A673 (cell line): ENCODE measurements at regions of chr10 and their contacts with region 1.

Region 1: DNA sequence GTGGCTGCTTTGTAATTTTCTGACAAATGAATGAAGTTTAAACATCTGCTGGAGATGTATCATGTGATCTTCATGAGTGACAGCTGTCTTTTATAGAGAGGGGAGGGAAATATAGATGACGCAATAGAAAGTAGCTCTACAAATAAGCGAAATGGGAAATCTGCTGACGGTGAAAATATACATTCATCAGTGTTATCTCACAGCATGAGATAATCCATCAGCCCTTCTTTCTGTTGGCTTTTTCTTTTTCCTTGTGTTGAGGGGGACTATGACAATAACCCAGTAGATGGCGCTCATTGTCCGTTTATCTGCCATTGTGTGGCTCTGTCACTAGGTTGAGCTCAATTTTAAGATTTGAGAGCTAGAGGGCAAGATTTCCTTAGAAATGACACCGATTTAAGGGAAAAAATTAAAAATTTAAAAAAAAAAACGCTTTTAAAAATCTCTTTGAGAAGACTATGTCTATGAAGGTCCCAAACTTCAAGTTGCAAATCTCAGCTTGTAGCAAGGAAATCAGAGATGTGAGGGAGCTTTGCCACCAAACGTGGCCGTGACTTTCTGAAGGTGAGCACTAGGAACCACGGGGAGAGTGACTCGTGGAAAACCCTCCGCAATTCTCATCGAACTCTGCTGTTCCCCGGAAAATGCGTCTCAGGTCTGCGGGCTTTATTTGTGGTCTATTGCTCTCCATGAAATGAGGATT is 114.6 kb upstream of the SFMBT2 start:
- DNase-seq: peak; percentile 85
- H3K4me3 ChIP-seq: peak overlapping the region; percentile 13
- H3K27ac ChIP-seq: no peak overlapping the region
- H3K4me1 ChIP-seq: peaks cover 7% of the 10 kb centered on the region
- H3K27me3 ChIP-seq: no peaks in the 10 kb centered on the region
- CTCF ChIP-seq: peak; percentile 91

Region 2: DNA sequence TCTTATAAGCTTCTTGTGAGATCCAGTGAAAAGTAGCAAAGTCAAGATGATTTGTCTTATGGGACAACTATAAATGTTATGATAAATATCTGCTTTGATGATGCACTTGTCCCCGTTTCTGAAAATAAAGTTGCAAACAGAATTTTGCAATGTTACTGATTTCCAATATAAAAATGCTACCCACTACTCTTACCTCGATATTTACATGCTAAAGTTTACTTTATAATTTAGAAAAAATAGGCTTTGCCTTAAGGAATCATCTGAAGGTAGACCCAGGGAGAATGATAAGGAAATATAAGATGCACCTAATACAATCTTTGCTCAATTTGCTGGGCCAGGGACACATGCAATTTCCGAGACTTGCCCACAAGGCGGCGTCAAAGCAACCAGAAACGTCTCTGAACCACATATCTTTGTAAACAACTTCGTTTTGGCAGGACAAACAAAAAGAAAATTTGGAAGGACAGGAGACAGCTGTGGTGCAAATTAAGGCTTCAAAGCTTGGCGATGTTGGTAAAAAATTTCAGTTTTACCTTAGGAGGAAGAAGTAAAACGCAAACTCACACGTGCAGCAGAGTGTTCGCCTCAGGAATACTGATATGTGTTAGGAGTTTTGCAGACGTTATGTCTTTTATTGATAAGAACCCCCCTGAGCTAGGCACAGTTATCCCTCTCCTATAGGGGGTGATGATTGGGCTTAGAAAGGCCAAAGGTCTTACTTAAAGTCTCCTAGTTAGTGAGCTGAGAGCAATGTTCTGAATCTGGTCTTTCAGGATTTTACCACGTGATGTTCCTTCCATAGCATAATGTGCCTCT is 1079.8 kb before region 1 on chr10:
- CTCF ChIA-PET with region 1: interaction called, 10 read pairs
- POLR2A ChIA-PET with region 1: no interaction called
- intact Hi-C with region 1: no loop called
- DNase-seq: peak; percentile 44
- H3K4me3 ChIP-seq: no peak overlapping the region
- H3K27ac ChIP-seq: no peak overlapping the region
- H3K4me1 ChIP-seq: no peaks in the 10 kb centered on the region
- H3K27me3 ChIP-seq: peaks cover 47% of the 10 kb centered on the region
- CTCF ChIP-seq: peak; percentile 80

Region 3: GRCh38 chr10:6542999-6543430 is 982.5 kb before region 1 on chr10:
- CTCF ChIA-PET with region 1: no interaction called
- POLR2A ChIA-PET with region 1: no interaction called
- intact Hi-C with region 1: no loop called
- DNase-seq: no peak
- H3K4me3 ChIP-seq: no peak overlapping the region
- H3K27ac ChIP-seq: no peak overlapping the region
- H3K4me1 ChIP-seq: no peaks in the 10 kb centered on the region
- H3K27me3 ChIP-seq: peaks cover 81% of the 10 kb centered on the region
- CTCF ChIP-seq: no peak

Region 4: DNA sequence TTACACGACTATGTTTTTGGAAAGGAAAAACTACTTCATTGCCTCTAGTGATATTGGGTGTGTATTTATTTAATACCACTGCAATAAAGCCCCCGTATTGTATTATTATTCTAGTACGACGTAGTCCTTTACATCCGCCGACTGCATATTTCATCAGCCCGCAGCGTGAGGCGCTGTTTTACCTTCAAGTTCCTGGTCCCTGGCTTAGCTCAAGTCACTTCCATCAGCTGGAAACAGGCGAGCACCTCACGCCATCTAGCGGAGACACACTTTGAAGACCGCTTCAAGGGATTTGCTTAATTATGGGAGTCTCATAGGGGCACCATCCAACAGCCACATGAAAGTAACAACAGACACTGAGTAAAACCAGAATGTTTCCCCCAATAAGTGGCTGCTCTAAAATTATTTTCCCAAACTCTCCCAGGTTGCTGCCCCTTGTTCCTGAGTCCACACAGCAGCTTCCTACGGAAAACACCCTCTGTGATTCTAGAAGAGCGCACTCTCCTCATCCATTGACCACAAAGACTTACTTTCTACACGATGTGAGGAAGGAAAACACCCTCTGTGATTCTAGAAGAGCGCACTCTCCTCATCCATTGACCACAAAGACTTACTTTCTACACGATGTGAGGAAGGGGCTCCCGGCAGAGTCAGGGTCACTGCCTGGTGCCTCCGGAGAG is 161.9 kb after region 1 on chr10:
- CTCF ChIA-PET with region 1: interaction called, 72 read pairs
- POLR2A ChIA-PET with region 1: no interaction called
- intact Hi-C with region 1: loop called (anchors 1 kb)
- DNase-seq: peak; percentile 92
- H3K4me3 ChIP-seq: no peak overlapping the region
- H3K27ac ChIP-seq: no peak overlapping the region
- H3K4me1 ChIP-seq: no peaks in the 10 kb centered on the region
- H3K27me3 ChIP-seq: no peaks in the 10 kb centered on the region
- CTCF ChIP-seq: peak; percentile 96

Region 5: GRCh38 chr10:7872041-7872442 is 346.6 kb after region 1 on chr10:
- CTCF ChIA-PET with region 1: interaction called, 16 read pairs
- POLR2A ChIA-PET with region 1: no interaction called
- intact Hi-C with region 1: loop called (anchors 5 kb)
- DNase-seq: peak; percentile 62
- H3K4me3 ChIP-seq: peak overlapping the region; percentile 46
- H3K27ac ChIP-seq: peak overlapping the region; percentile 21
- H3K4me1 ChIP-seq: peaks cover 7% of the 10 kb centered on the region
- H3K27me3 ChIP-seq: no peaks in the 10 kb centered on the region
- CTCF ChIP-seq: peak; percentile 85

Region 6: DNA sequence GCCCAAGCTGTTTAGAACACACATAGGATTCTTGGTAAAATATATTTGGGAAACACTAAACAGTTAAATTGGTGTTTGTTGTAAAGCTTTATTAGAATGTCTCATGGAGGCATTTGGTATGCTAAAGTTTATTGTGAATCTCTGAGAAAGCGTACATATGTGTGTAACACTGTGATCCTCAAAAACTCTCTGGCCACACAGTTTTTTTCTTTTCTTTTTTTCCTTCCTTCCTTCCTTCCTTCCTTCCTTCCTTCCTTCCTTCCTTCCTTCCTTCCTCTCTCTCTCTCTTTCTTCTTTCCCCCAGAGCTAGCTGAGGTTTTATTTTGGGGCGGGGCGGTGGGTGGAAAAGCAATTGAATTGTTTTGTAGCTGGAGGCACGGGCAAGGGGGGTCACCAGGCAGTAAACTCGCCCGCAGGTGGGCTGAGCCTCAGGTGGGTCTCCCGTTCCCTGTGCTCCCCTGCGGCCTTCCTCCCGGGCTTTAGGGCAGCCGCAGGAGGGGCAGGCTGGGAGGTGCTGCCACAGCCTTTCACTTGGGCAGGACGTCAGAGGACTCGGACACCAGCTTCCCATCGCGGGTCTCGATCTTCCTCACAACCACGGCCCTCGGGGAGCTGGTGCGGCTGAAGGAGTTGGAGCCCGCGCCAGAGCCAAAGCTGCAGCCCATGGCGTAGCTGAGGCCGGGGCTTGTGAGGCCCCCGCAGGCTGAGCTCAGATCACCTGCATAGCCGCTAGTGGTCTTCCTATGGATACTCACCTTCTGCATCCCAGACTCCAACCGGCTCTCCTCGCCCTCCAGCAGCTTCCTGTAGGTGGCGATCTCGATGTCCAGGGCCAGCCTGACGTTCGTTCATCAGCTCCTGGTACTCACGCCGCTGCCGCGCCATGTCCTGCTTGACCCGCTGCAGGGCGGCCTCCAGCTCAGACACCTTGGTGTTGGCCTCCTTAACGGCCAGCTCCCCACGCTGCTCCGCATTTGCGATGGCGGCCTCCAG is 988.0 kb after region 1 on chr10:
- CTCF ChIA-PET with region 1: interaction called, 3 read pairs
- POLR2A ChIA-PET with region 1: no interaction called
- intact Hi-C with region 1: loop called (anchors 10 kb)
- DNase-seq: peak; percentile 69
- H3K4me3 ChIP-seq: no peak overlapping the region
- H3K27ac ChIP-seq: peak overlapping the region; percentile 86
- H3K4me1 ChIP-seq: peaks cover 26% of the 10 kb centered on the region
- H3K27me3 ChIP-seq: no peaks in the 10 kb centered on the region
- CTCF ChIP-seq: no peak; the same call in 1 of the 2 replicates

Region 7: DNA sequence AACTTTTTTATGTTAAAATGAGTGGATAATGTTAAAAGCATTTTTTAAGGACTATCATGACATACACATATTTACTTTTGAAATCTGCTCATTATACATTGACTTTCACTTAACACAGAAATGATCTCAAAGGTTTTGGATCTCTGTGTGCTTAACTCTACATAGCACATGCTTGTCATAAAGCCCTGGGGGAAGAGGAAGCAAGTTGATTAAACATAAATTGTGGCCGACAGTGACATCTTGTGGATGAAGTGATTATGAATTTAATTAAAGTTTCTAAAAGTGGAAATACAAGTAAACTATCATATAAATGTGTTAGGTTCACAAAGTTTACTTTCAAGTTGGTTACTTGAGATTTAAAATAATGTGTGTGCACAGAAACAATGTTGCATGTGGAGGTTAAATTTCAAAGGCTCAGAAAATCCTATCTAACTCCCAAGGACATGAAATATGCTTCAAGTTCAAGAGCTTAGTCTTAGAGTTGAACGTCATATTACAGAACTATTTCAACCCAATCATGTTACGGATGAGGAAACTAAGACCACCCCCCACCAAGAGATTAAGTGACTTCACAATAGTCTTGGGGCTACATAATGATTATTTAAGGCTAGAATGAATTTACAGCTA is 1776.8 kb after region 1 on chr10:
- CTCF ChIA-PET with region 1: interaction called, 6 read pairs
- POLR2A ChIA-PET with region 1: no interaction called
- intact Hi-C with region 1: loop called (anchors 1 kb)
- DNase-seq: peak; percentile 74
- H3K4me3 ChIP-seq: no peak overlapping the region
- H3K27ac ChIP-seq: no peak overlapping the region
- H3K4me1 ChIP-seq: no peaks in the 10 kb centered on the region
- H3K27me3 ChIP-seq: no peaks in the 10 kb centered on the region
- CTCF ChIP-seq: peak; percentile 53